PC-3 (cell line): ENCODE measurements at regions of chr1 and their contacts with region 1.

Region 1: GRCh38 chr1:248821101-248821500 is 4.6 kb downstream of the SH3BP5L start:
- DNase-seq: peak; percentile 97
- ATAC-seq: peak; percentile 31
- H3K4me3 ChIP-seq: peak overlapping the region; percentile 73; the same call in 1 of the 2 replicates
- H3K27ac ChIP-seq: peak overlapping the region; percentile 85
- H3K4me1 ChIP-seq: peaks cover 53% of the 10 kb centered on the region
- H3K27me3 ChIP-seq: no peaks in the 10 kb centered on the region
- CTCF ChIP-seq: no peak

Region 2: GRCh38 chr1:248703674-248704073 is 117.4 kb before region 1 on chr1:
- CTCF ChIA-PET with region 1: no interaction called
- POLR2A ChIA-PET with region 1: no interaction called
- intact Hi-C with region 1: loop called (anchors 5 kb)
- DNase-seq: no peak
- ATAC-seq: no peak; the same call in none of the 2 replicates
- H3K4me3 ChIP-seq: no peak overlapping the region
- H3K27ac ChIP-seq: no peak overlapping the region
- H3K4me1 ChIP-seq: no peaks in the 10 kb centered on the region
- H3K27me3 ChIP-seq: 0 out of 2 replicates have a peak, but pooled peaks cover 3% of the 10 kb centered on the region
- CTCF ChIP-seq: peak; percentile 73

Region 3: GRCh38 chr1:248807067-248807737 is 13.9 kb before region 1 on chr1:
- CTCF ChIA-PET with region 1: no interaction called
- POLR2A ChIA-PET with region 1: interaction called, 3 read pairs
- intact Hi-C with region 1: loop called (anchors 1 kb)
- DNase-seq: peak; percentile 60
- ATAC-seq: peak; percentile 39
- H3K4me3 ChIP-seq: no peak overlapping the region
- H3K27ac ChIP-seq: no peak overlapping the region
- H3K4me1 ChIP-seq: peaks cover 22% of the 10 kb centered on the region
- H3K27me3 ChIP-seq: no peaks in the 10 kb centered on the region
- CTCF ChIP-seq: peak; percentile 90